ENCODE measurements at regions of chr3 and their contacts with region 1.

Region 1: DNA sequence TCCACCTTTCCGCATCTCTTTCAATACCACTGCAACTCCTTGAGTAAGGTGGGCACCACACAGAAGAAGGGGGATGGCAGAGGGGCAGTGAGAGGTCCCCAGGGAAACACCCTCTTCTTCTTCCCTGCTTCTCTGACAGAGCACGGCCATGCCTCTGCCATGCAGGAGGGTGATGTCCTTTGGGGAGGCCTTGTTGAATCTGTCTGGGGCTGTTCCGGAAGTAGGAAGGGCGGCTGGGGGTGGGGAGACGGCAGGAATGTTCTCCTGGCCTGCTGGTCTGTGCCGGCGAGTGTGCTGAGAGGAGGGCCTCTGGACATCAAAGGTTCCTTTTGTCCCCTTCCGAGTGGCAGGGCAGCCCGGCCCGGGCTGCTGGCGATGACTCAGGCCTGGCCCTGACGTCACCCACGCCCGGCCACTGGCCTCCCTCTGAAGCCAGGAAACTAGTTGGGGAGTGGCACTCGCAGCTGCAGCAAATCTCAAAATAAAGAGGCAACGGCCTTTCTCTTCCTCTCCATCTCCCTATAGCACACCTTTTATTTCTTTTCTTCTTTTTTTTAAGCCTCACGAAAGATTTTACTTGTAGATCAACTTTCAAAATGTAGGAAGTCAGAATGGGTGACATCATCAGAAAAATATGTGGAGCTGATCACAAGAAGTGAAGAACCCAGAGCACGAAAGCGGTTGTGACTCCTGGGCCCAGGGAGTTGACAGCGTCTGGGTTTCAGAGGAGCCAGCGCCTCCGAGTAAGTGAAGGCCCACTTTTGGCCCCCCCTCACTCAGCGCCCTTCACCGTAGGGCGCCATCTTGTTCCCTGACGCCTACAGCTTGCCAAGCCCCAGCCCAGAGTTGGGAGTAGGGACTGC is at the start of gene ZBTB38:
- DNase-seq: peak; percentile 92
- H3K4me3 ChIP-seq: peak within 1 kb of the TSS; percentile 30 to 41 (median 39)
- H3K27ac ChIP-seq: peak within 1 kb of the TSS; percentile 99
- H3K4me1 ChIP-seq: peaks cover 48% of the 10 kb centered on the region
- H3K27me3 ChIP-seq: no peaks in the 10 kb centered on the region
- CTCF ChIP-seq: no peak
- total RNA-seq, gene ZBTB38: 64.7 to 110 TPM

Region 2: DNA sequence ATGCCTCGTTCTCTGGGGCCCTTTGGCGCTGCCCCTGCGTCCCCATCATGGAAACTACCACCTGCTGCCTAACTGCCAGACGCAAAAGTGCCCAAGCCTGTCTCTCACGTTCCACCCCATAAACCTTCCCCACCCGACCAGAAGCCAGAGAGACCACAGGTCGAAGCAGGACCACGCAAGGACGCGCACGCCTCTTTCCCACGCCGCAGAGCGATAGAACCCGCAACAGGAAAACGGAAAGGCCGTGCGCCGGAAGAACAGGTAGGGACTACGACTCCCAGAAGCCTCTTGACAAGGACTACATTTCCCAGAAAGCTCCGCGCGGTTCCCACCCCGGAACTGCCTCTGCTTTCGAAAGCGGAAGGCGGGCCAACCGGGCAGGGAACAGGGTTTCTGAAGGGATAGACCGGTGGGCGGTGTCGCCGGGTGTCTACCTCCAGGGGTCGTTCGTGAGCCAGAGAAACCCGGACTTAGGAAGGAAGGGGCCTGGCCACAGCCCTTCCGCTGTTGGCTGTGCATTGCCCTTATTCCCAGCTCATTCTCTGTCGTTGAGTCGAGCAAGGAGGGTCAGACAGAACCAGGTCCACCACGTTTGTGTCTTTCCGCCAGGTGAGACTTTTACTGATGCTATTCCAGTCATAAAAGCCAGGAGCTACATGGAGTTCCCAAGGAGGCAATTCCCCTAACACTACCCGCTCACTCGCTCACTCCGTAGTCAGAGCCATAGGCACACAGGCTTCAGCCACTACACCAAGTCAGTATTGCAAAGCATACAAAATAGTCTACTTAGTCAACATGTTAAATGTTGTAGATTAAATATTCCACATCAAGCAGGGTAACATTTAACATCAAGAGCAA is 56.6 kb before region 1 on chr3:
- CTCF ChIA-PET with region 1: no interaction called
- dilution Hi-C with region 1: no loop called
- in situ Hi-C with region 1: no loop called
- intact Hi-C with region 1: loop called (anchors 1 kb)
- DNase-seq: peak; percentile 94
- H3K4me3 ChIP-seq: peak overlapping the region; percentile 75 to 89 (median 78)
- H3K27ac ChIP-seq: peak overlapping the region; percentile 59
- H3K4me1 ChIP-seq: peaks cover 12% of the 10 kb centered on the region
- H3K27me3 ChIP-seq: no peaks in the 10 kb centered on the region
- CTCF ChIP-seq: peak; percentile 65 to 72

Region 3: GRCh38 chr3:141336672-141337522 is 31.4 kb before region 1 on chr3:
- CTCF ChIA-PET with region 1: no interaction called
- dilution Hi-C with region 1: no loop called
- in situ Hi-C with region 1: no loop called
- intact Hi-C with region 1: loop called (anchors 2 kb)
- DNase-seq: peak; percentile 92
- H3K4me3 ChIP-seq: no peak overlapping the region
- H3K27ac ChIP-seq: peak overlapping the region; percentile 57
- H3K4me1 ChIP-seq: peaks cover 19% of the 10 kb centered on the region
- H3K27me3 ChIP-seq: no peaks in the 10 kb centered on the region
- CTCF ChIP-seq: no peak

Region 4: GRCh38 chr3:141402476-141403171 is 34.3 kb after region 1 on chr3:
- CTCF ChIA-PET with region 1: no interaction called
- dilution Hi-C with region 1: no loop called
- in situ Hi-C with region 1: no loop called
- intact Hi-C with region 1: loop called (anchors 1 kb)
- DNase-seq: no peak
- H3K4me3 ChIP-seq: peak overlapping the region; percentile 60 to 65 (median 61)
- H3K27ac ChIP-seq: peak overlapping the region; percentile 58
- H3K4me1 ChIP-seq: peaks cover 52% of the 10 kb centered on the region
- H3K27me3 ChIP-seq: no peaks in the 10 kb centered on the region
- CTCF ChIP-seq: no peak

Region 5: GRCh38 chr3:141412087-141412935 is 44.0 kb after region 1 on chr3:
- CTCF ChIA-PET with region 1: no interaction called
- dilution Hi-C with region 1: loop called (anchors 5 kb)
- in situ Hi-C with region 1: no loop called
- intact Hi-C with region 1: loop called (anchors 2 kb)
- DNase-seq: peak; percentile 58
- H3K4me3 ChIP-seq: peak overlapping the region; percentile 17 to 37 (median 26)
- H3K27ac ChIP-seq: peak overlapping the region; percentile 85
- H3K4me1 ChIP-seq: peaks cover 41% of the 10 kb centered on the region
- H3K27me3 ChIP-seq: no peaks in the 10 kb centered on the region
- CTCF ChIP-seq: no peak

Region 6: GRCh38 chr3:141707741-141708203 is 339.5 kb after region 1 on chr3:
- CTCF ChIA-PET with region 1: no interaction called
- dilution Hi-C with region 1: no loop called
- in situ Hi-C with region 1: no loop called
- intact Hi-C with region 1: no loop called
- DNase-seq: peak; percentile 37
- H3K4me3 ChIP-seq: no peak overlapping the region
- H3K27ac ChIP-seq: no peak overlapping the region
- H3K4me1 ChIP-seq: peaks cover 9% of the 10 kb centered on the region
- H3K27me3 ChIP-seq: no peaks in the 10 kb centered on the region
- CTCF ChIP-seq: no peak